SK-N-SH (cell line): ENCODE measurements at regions of chr2 and their contacts with region 1.

Region 1: GRCh38 chr2:11753886-11754699 is 7.7 kb downstream of the LPIN1 start:
- DNase-seq: peak; percentile 77
- H3K4me3 ChIP-seq: no peak overlapping the region
- H3K27ac ChIP-seq: peak overlapping the region in 1 of 2 experiments; percentile 73; a peak in 2 of 4 replicates
- H3K4me1 ChIP-seq: peaks cover 23 to 45% of the 10 kb centered on the region in 2 experiments
- H3K27me3 ChIP-seq: no peaks in the 10 kb centered on the region
- CTCF ChIP-seq: no peak
- EP300 ChIP-seq: peak in 1 of 2 experiments; percentile 67; a peak in 1 of 4 replicates
- RAD21 ChIP-seq: no peak

Region 2: GRCh38 chr2:11764359-11764758 is 10.3 kb after region 1 on chr2:
- CTCF ChIA-PET with region 1: interaction called, 52 read pairs
- POLR2A ChIA-PET with region 1: interaction called, 18 read pairs
- DNase-seq: peak; percentile 89
- H3K4me3 ChIP-seq: no peak overlapping the region
- H3K27ac ChIP-seq: peak overlapping the region in 1 of 2 experiments; percentile 97; a peak in 2 of 4 replicates
- H3K4me1 ChIP-seq: peaks cover 0 to 48% of the 10 kb centered on the region in 2 experiments; a peak in 2 of 4 replicates
- H3K27me3 ChIP-seq: no peaks in the 10 kb centered on the region
- CTCF ChIP-seq: no peak
- EP300 ChIP-seq: peak in 1 of 2 experiments; percentile 97; a peak in 2 of 4 replicates
- RAD21 ChIP-seq: peak; percentile 32